Transverse colon (tissue), 4 donors: ENCODE measurements at regions of chr3 and their contacts with region 1.

Region 1: DNA sequence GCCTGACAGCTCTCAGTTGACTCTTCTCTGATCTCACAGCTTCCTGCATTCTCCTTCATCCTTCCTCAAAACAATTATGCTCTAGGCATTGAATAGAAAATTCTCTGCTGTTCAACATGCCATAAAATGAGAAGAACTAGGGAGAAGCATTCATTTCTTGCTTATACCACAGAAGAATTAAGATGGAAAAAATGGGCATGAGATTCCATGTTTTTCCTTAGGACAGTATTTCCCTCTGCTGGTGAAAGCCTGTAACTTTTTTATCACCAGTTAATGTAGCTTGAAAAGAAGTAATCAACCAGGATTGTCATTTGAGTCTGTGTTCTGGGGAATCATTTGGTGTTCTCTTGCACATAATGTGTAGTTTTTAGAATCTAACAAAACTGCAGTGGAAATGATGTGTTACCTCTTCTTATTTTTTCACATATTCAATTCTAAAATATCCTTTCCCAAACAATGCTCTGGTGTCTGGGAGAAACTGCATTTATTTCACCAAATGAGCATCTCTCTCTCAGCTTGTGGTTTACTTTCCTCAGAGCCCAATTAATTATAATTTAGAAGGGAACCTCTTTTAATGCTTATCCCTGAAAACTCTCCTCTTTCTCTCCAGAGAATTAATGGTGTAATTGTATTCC is 92.8 kb upstream of the DCBLD2 start:
- DNase-seq: no peak
- H3K4me3 ChIP-seq: no peak overlapping the region
- H3K27ac ChIP-seq: no peak overlapping the region
- H3K4me1 ChIP-seq: no peaks in the 10 kb centered on the region
- H3K27me3 ChIP-seq: peaks cover 5% of the 10 kb centered on the region
- CTCF ChIP-seq: peak; percentile 61 to 66 (median 63)
- EP300 ChIP-seq: no peak
- POLR2A ChIP-seq: no peak

Region 2: DNA sequence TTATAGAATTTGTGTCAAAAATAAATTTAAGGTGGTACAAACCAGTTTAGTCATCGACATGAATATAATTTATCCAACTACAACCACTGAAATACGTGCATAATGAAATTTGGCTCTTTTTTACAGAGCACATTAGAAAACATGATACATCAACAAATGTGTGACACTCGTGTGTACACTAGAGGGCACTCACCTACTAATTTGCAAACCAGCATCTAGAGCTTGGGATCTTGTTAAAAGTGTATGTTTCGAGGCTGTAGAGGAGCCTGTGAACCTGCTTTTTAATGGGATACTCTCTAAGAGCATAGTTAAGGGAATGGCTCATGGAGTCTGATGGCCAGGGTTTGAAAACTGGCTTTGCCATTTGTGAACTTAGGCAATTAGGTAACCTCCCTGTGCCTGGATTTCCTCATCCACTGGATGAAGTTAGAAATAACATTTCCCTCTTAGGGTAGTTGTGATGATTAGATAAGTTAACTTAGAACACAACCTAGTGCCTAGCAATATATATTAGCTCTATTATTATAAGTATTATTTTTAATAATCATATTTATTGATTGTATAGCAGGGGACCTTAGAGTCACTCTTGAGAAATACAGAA is 392.1 kb before region 1 on chr3:
- in situ Hi-C with region 1: loop called in 2 of 4 experiments (anchors 25 kb)
- intact Hi-C with region 1: loop called (anchors 5 kb)
- DNase-seq: no peak
- H3K4me3 ChIP-seq: no peak overlapping the region
- H3K27ac ChIP-seq: no peak overlapping the region
- H3K4me1 ChIP-seq: peaks cover 0 to 4% (median 0%) of the 10 kb centered on the region in 4 donors
- H3K27me3 ChIP-seq: no peaks in the 10 kb centered on the region
- CTCF ChIP-seq: peak; percentile 43 to 61 (median 53)
- EP300 ChIP-seq: no peak
- POLR2A ChIP-seq: no peak